Stomach (tissue), 19 donors: ENCODE measurements at regions of chr2 and their contacts with region 1.

Region 1: DNA sequence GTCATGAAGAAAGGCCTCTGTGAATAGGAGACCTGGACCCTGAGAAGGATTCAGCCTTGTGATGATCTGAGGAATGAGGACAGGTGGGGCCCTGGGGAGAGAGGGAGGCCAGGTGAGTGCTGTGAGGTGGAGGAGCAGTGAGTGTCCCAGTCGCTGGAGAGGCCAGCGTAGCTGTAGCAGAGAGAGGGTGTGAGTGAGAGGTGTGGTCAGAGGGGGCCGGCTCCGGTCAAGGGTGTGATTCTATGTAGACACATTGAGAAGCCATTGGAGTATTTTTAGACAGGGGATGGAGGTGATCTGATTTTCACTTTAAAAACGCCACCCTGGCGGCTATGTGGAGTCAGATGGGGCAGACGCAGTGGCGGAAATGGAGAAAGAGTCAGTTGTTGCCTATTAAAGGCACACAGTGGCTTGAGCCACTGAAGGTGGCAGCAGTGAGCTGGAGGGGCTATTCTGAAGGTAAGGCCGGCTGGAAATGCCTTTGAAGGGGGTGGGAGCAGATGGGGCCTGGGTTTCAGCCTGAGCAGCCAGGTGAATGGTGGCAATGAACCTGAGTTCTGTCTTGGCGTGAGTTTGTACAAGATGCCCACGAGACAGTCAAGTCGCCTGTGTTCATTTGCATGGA is 55.6 kb downstream of the GREB1 start:
- DNase-seq: no peak
- H3K4me3 ChIP-seq: no peak overlapping the region
- H3K27ac ChIP-seq: no peak overlapping the region
- H3K4me1 ChIP-seq: peaks cover 0 to 3% (median under 1%) of the 10 kb centered on the region in 4 donors
- H3K27me3 ChIP-seq: no peaks in the 10 kb centered on the region
- CTCF ChIP-seq: no peak
- EP300 ChIP-seq: no peak
- POLR2A ChIP-seq: no peak

Region 2: GRCh38 chr2:11482723-11483518 is 106.5 kb before region 1 on chr2:
- intact Hi-C with region 1: loop called (anchors 5 kb)
- DNase-seq: peak; percentile 41 to 81
- H3K4me3 ChIP-seq: peak overlapping the region; percentile 55 to 65 (median 60)
- H3K27ac ChIP-seq: peak overlapping the region; percentile 9 to 71 (median 47)
- H3K4me1 ChIP-seq: peaks cover 14 to 21% (median 20%) of the 10 kb centered on the region in 4 donors
- H3K27me3 ChIP-seq: peaks cover 0 to 62% (median 30%) of the 10 kb centered on the region in 3 donors
- CTCF ChIP-seq: no peak
- EP300 ChIP-seq: no peak
- POLR2A ChIP-seq: no peak

Region 3: GRCh38 chr2:11743846-11744553 is 154.6 kb after region 1 on chr2:
- intact Hi-C with region 1: no loop called
- DNase-seq: peak; percentile 94 to 98
- H3K4me3 ChIP-seq: peak overlapping the region in 3 of 4 donors; percentile 7 to 21 (median 10)
- H3K27ac ChIP-seq: peak overlapping the region in 4 of 5 donors; percentile 76 to 93 (median 85)
- H3K4me1 ChIP-seq: peaks cover 41 to 58% (median 50%) of the 10 kb centered on the region in 4 donors
- H3K27me3 ChIP-seq: no peaks in the 10 kb centered on the region
- CTCF ChIP-seq: no peak
- EP300 ChIP-seq: no peak
- POLR2A ChIP-seq: no peak